Heart left ventricle (tissue), 16 donors: ENCODE measurements at regions of chr3 and their contacts with region 1.

Region 1: GRCh38 chr3:68893600-68894239 is 38.6 kb downstream of the TAFA4 start:
- DNase-seq: no peak
- ATAC-seq: no peak
- H3K4me3 ChIP-seq: no peak overlapping the region
- H3K27ac ChIP-seq: no peak overlapping the region
- H3K4me1 ChIP-seq: no peaks in the 10 kb centered on the region
- H3K27me3 ChIP-seq: peaks cover 0 to 17% (median 0%) of the 10 kb centered on the region in 9 donors
- CTCF ChIP-seq: peak; percentile 37 to 66 (median 53)
- POLR2A ChIP-seq: no peak

Region 2: GRCh38 chr3:66938338-66938963 is 1955.3 kb before region 1 on chr3:
- intact Hi-C with region 1: loop called in 3 of 10 experiments (anchors 10 kb)
- DNase-seq: no peak
- ATAC-seq: peak in 3 of 4 donors; percentile 67 to 71 (median 71)
- H3K4me3 ChIP-seq: no peak overlapping the region
- H3K27ac ChIP-seq: no peak overlapping the region
- H3K4me1 ChIP-seq: no peaks in the 10 kb centered on the region
- H3K27me3 ChIP-seq: peaks cover 0 to 25% (median 0%) of the 10 kb centered on the region in 9 donors
- CTCF ChIP-seq: peak; percentile 51 to 78 (median 70)
- POLR2A ChIP-seq: no peak

Region 3: GRCh38 chr3:66971891-66972551 is 1921.7 kb before region 1 on chr3:
- intact Hi-C with region 1: loop called in 3 of 10 experiments (anchors 5 to 10 kb)
- DNase-seq: peak; percentile 68 to 76 (median 72)
- ATAC-seq: peak; percentile 93 to 100 (median 98)
- H3K4me3 ChIP-seq: peak overlapping the region in 10 of 12 donors; percentile 6 to 54 (median 46)
- H3K27ac ChIP-seq: peak overlapping the region in 3 of 12 donors; percentile 22 to 47 (median 30)
- H3K4me1 ChIP-seq: peaks cover 0 to 12% (median 5%) of the 10 kb centered on the region in 12 donors
- H3K27me3 ChIP-seq: peaks cover 0 to 1% (median 0%) of the 10 kb centered on the region in 9 donors
- CTCF ChIP-seq: peak; percentile 70 to 90 (median 82)
- POLR2A ChIP-seq: no peak

Region 4: GRCh38 chr3:67113802-67114407 is 1779.8 kb before region 1 on chr3:
- intact Hi-C with region 1: loop called in 1 of 10 experiments (anchors 5 kb)
- DNase-seq: peak; percentile 54 to 61 (median 58)
- ATAC-seq: peak; percentile 55 to 87 (median 80)
- H3K4me3 ChIP-seq: no peak overlapping the region
- H3K27ac ChIP-seq: no peak overlapping the region
- H3K4me1 ChIP-seq: no peaks in the 10 kb centered on the region
- H3K27me3 ChIP-seq: peaks cover 0 to 17% (median 0%) of the 10 kb centered on the region in 9 donors
- CTCF ChIP-seq: peak; percentile 69 to 88 (median 80)
- POLR2A ChIP-seq: no peak

Region 5: DNA sequence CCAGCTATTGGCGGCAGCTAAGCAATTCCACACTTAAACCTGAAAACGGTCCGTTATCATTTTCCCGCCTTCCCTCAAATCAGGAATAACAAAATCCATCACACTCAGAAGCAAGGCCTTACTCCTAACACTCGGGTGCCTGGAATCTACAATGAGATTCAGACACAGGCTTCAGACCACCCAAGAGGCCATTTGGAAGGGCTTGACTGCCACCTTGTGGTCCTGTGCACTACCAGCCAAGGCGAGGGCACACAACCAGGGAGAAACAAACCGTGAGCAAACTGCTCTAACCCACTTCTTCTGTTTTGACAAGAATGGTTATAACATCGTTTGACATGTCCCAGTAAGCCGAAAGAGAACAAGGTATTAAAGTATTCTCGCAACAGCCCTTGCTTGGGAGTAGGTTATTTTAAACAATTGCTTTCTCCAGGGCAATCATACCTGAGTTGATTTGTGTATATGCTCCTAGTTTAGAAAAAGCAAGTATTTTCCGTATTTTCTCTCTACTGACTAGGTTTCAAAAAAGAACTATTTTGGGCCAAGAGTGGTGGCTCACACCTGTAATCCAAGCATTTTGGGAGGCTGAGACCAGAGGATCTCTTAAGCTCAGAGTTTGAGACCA is 78.7 kb after region 1 on chr3:
- intact Hi-C with region 1: loop called in 1 of 10 experiments (anchors 5 kb)
- DNase-seq: peak in 4 of 5 donors; percentile 17 to 54 (median 32)
- ATAC-seq: peak; percentile 47 to 82 (median 68)
- H3K4me3 ChIP-seq: no peak overlapping the region
- H3K27ac ChIP-seq: no peak overlapping the region
- H3K4me1 ChIP-seq: no peaks in the 10 kb centered on the region
- H3K27me3 ChIP-seq: peaks cover 0 to 9% (median 0%) of the 10 kb centered on the region in 9 donors
- CTCF ChIP-seq: peak; percentile 34 to 69 (median 54)
- POLR2A ChIP-seq: no peak